ENCODE measurements at regions of chr17 and their contacts with region 1.

Region 1: DNA sequence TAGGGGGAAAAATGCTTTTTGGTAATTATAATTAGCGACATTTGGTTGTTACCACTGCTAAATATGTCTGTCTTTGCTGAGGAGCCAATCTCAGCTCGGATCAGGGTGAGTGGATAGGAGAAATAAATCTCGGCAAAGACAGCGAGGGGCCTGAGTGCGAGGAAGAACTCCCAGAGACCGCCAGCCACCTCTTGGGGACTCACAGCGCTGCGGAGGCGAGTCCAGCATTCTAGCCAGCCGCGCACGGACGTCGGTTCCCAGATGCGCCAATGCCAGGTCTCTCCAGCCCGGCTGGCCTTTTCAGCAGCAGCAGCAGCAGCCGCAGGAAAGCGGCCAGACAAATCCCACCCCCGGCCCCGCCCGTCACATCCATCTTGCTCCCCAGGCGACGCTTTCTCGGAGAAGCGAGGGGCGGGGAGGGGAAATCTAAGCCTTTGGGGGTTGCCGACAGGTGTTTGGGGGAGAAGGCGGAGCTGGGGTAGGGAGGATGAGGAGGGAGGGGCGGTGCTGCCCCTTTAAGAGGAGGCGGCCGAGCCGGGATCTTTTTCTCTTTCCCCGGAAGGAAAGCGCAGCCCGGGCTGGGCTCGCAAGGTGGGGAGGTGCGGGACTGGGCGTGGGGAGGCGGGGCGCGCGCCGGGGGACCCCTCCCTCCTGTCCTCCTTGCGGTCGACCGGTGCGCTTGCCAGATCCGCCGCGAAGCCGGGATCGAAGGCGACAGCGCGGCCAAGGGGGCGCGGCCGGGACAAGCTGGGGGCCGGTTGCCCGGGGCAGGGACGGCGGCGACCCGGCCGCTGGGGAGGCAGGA is at the start of gene ITGA3:
- DNase-seq: peak; percentile 70
- ATAC-seq: peak; percentile 62
- H3K4me3 Mint-ChIP-seq: peak within 1 kb of the TSS; percentile 84
- H3K27ac Mint-ChIP-seq: peak within 1 kb of the TSS; percentile 58
- H3K4me1 Mint-ChIP-seq: peaks cover 37% of the 10 kb centered on the region
- H3K27me3 Mint-ChIP-seq: peaks cover 7% of the 10 kb centered on the region
- total RNA-seq, gene ITGA3: 10.3 to 11.3 TPM

Region 2: GRCh38 chr17:50026901-50027630 is 28.6 kb before region 1 on chr17:
- CTCF ChIA-PET with region 1: interaction called, 65 read pairs
- DNase-seq: peak; percentile 79
- ATAC-seq: peak; percentile 74
- H3K4me3 Mint-ChIP-seq: no peak overlapping the region
- H3K27ac Mint-ChIP-seq: no peak overlapping the region
- H3K4me1 Mint-ChIP-seq: peaks cover 14% of the 10 kb centered on the region
- H3K27me3 Mint-ChIP-seq: peaks cover 26% of the 10 kb centered on the region

Region 3: DNA sequence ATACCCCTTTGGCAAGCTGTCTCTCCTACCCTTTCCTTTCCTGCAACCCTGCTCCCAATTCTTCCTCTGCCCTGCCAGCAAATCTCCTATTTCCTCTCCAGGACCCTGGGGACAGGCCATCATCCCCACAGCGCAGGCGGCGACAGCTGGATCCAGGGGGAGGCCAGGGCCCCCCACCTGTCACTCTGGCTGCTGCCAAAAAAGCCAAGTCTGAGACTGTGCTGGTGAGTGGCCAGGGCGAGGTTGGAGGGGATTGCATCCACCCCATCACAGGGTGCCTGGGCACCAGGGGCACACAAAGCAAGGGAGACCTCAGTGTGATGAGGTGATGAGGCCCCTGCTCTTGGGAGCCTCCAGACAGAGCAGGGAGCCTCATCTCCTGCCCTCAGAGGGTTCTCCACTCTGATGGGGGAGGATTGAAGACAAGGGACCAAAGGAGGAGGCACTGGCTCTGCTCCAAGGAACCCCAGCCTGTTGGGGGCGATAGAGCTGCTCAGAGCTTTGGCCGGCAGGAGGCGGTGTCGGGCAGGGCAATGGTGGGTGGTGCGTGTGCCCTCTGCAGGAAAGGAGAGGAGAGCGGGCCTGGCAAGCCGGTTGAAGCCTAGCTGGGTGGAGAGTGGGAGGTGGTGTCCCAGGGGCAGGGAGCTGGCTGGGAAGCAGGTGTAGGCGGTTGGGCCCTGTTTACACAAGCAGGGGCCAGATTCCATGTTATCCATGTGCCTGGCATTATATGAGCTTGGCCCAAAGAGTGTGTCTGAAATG is 23.9 kb after region 1 on chr17:
- CTCF ChIA-PET with region 1: interaction called, 12 read pairs
- DNase-seq: no peak
- ATAC-seq: peak; percentile 23
- H3K4me3 Mint-ChIP-seq: no peak overlapping the region
- H3K27ac Mint-ChIP-seq: no peak overlapping the region
- H3K4me1 Mint-ChIP-seq: no peaks in the 10 kb centered on the region
- H3K27me3 Mint-ChIP-seq: no peaks in the 10 kb centered on the region

Region 4: GRCh38 chr17:50087246-50087911 is 31.8 kb after region 1 on chr17:
- CTCF ChIA-PET with region 1: interaction called, 42 read pairs
- DNase-seq: peak; percentile 86
- ATAC-seq: peak; percentile 90
- H3K4me3 Mint-ChIP-seq: no peak overlapping the region
- H3K27ac Mint-ChIP-seq: no peak overlapping the region
- H3K4me1 Mint-ChIP-seq: no peaks in the 10 kb centered on the region
- H3K27me3 Mint-ChIP-seq: no peaks in the 10 kb centered on the region

Region 5: GRCh38 chr17:50117202-50118051 is 61.8 kb after region 1 on chr17:
- CTCF ChIA-PET with region 1: no interaction called
- DNase-seq: peak; percentile 71
- ATAC-seq: peak; percentile 92
- H3K4me3 Mint-ChIP-seq: no peak overlapping the region
- H3K27ac Mint-ChIP-seq: no peak overlapping the region
- H3K4me1 Mint-ChIP-seq: peaks cover 7% of the 10 kb centered on the region
- H3K27me3 Mint-ChIP-seq: peaks cover 65% of the 10 kb centered on the region

Measured in activated CD8-positive, alpha-beta memory T cell treated with anti-CD3 and anti-CD28 coated beads, Interleukin-2, amount 10 ng/mL, durations not matched to agents 7 days and 5 days (primary cell).